Activated CD4-positive, alpha-beta T cell treated with anti-CD3 and anti-CD28 coated beads, Interleukin-2, amount 10 ng/mL, durations not matched to agents 24 days and 14 days (primary cell): ENCODE measurements at regions of chr11 and their contacts with region 1.

Region 1: DNA sequence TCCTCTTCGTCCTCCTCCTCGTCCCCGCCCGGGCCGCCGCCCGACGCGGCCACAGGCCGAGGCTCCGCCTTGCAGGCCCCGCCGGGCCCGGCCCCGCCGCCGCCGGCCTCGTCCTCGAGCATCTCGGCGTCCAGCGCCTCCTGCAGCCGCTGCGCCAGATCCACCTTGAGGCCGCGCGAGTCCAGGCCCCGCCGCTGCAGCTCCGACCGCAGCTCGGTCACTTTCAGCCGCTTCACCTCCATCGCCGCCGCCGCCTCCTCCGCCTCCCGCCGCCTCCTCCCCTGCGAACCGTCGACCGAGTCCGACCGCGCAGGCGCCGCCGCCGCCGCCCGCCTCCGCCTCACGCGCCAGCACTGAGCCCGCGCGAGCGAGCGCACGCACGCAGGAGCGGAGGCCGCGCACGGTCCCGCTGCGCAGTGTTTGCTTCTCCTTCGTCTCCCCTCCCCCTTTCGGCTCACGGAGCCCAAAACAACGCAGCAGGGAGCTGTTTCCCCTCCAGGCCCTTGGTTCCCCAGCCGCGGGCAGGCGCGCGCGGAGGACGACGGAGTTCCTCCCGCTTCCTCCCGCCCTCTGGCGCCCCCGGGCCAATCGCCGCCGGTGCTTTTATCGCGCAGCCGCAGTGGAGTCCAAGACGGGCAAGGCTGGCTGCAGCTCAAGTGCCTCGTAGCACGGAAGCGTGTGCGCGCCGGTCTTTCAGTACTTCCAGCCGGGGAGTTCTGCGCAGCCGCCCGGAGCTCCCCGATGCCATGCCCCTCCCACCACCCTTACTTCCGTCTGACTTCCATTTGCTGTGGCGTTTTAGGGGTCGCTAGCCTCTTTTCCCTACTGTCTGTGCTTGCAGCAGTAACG is at the start of gene HNRNPUL2:
- DNase-seq: peak; percentile 100
- H3K4me3 Mint-ChIP-seq: peak within 1 kb of the TSS; percentile 93
- H3K27ac Mint-ChIP-seq: peak within 1 kb of the TSS; percentile 99
- H3K4me1 Mint-ChIP-seq: peaks cover 38% of the 10 kb centered on the region
- H3K27me3 Mint-ChIP-seq: peaks cover 2% of the 10 kb centered on the region
- total RNA-seq, gene HNRNPUL2: 60.5 and 60.6 TPM in 2 replicates

Region 2: DNA sequence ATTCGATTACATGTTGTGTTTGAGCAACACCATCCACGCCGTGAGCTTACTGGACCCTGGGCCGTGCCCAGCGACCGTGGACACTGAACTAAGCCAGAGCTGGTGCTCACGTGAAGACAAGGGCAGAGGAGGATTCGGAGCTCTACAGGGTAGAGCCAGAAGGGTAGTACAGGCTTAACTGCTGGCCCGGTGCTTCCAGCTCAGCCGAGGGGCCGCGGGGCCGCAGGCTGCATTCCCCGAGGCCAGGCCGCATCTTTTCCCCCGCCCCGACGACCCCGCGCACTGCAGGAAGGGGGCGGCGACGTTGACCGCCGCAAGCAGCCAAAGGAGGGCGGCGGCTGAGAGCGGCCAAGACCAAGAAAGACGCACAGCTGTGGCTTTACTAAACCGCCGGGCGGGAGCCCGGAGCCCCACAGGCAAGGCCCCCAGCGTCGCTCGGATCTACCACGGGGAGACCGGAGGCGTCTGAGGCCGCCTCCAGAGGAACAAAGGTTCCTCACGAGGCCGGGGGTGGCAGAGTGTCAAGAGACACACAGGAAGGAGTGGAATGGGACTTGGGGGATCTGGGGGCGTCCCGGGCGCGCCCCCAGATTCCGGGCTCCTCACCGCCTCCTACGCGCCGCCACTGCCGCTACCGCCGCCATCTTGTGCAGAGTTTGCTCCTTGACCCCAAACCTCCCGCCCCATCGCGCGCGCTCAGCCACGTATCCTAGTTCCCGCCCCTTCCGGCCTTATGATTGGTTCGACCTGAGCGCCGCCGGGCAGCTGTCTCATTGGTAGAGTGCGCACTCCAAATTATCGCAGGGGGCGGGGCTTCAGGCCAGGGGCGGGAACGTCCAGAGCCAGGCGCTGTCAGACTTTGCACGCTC is 80.9 kb before region 1 on chr11 and contains the start of gene GANAB:
- intact Hi-C with region 1: loop called (anchors 1 kb)
- DNase-seq: peak; percentile 99
- H3K4me3 Mint-ChIP-seq: peak within 1 kb of the TSS; percentile 99
- H3K27ac Mint-ChIP-seq: peak within 1 kb of the TSS; percentile 96
- H3K4me1 Mint-ChIP-seq: peaks cover 21% of the 10 kb centered on the region
- H3K27me3 Mint-ChIP-seq: no peaks in the 10 kb centered on the region
- total RNA-seq, gene GANAB: 251 and 257 TPM in 2 replicates

Region 3: GRCh38 chr11:62705880-62706849 is 21.0 kb before region 1 on chr11:
- intact Hi-C with region 1: loop called (anchors 1 kb)
- DNase-seq: peak; percentile 97
- H3K4me3 Mint-ChIP-seq: peak overlapping the region; percentile 96
- H3K27ac Mint-ChIP-seq: peak overlapping the region; percentile 89
- H3K4me1 Mint-ChIP-seq: peaks cover 33% of the 10 kb centered on the region
- H3K27me3 Mint-ChIP-seq: no peaks in the 10 kb centered on the region

Region 4: GRCh38 chr11:62771144-62772021 is 44.2 kb after region 1 on chr11 and contains the start of gene TAF6L:
- intact Hi-C with region 1: loop called (anchors 1 kb)
- DNase-seq: peak; percentile 98
- H3K4me3 Mint-ChIP-seq: peak within 1 kb of the TSS; percentile 93
- H3K27ac Mint-ChIP-seq: peak within 1 kb of the TSS; percentile 96
- H3K4me1 Mint-ChIP-seq: peaks cover 26% of the 10 kb centered on the region
- H3K27me3 Mint-ChIP-seq: no peaks in the 10 kb centered on the region
- total RNA-seq, gene TAF6L: 20.1 and 20.2 TPM in 2 replicates

Region 5: DNA sequence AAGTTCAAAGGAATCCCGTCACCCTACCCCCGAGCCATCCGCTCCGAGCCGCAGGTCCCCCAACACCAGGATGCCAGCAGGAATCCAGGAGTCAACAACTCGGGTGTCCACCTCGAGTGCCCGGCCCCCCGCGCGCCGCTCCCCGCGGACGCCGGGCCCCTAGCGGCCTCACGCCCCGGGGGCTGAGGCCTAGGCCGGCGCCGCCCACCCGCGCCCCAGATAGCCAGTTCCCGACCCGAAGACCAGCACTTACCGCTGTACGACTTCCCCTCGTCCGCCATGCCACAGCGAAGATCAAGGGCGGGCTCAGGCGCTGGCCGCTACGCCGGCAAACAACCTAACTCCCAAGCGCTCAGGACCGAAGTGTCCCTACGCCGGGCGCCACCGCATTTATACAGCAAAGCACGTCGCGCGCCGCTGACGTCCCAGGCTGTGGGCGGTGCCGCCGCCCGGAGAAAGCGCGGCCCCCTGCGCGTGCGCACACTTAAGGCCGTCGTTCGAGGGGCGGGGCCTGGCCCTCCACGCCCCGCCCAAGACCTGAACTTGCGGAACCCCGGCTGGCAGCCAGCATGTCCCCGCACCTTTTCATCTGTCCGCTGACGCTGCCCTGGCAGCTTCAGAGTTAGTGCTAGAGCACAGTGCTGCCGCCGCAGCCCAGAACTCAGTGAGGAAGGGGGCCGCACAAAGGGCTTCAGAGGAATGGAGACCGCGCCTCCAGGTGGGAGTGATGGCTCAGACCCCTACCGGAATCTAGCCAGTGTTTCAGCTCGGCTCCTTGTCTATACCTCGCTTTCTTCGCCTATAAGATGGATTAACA is 78.1 kb after region 1 on chr11 and contains the start of gene NXF1:
- intact Hi-C with region 1: loop called (anchors 2 kb)
- DNase-seq: peak; percentile 99
- H3K4me3 Mint-ChIP-seq: peak within 1 kb of the TSS; percentile 100
- H3K27ac Mint-ChIP-seq: peak within 1 kb of the TSS; percentile 95
- H3K4me1 Mint-ChIP-seq: peaks cover 30% of the 10 kb centered on the region
- H3K27me3 Mint-ChIP-seq: no peaks in the 10 kb centered on the region
- total RNA-seq, gene NXF1: 133 and 147 TPM in 2 replicates

Region 6: GRCh38 chr11:62863687-62864180 is 136.6 kb after region 1 on chr11:
- intact Hi-C with region 1: loop called (anchors 2 kb)
- DNase-seq: no peak
- H3K4me3 Mint-ChIP-seq: no peak overlapping the region
- H3K27ac Mint-ChIP-seq: no peak overlapping the region
- H3K4me1 Mint-ChIP-seq: peaks cover 32% of the 10 kb centered on the region
- H3K27me3 Mint-ChIP-seq: no peaks in the 10 kb centered on the region